Activated naive CD4-positive, alpha-beta T cell treated with anti-CD3 and anti-CD28 coated beads, Interleukin-2, amount 10 ng/mL, durations not matched to agents 7 days and 5 days (primary cell): ENCODE measurements at regions of chr3 and their contacts with region 1.

Region 1: DNA sequence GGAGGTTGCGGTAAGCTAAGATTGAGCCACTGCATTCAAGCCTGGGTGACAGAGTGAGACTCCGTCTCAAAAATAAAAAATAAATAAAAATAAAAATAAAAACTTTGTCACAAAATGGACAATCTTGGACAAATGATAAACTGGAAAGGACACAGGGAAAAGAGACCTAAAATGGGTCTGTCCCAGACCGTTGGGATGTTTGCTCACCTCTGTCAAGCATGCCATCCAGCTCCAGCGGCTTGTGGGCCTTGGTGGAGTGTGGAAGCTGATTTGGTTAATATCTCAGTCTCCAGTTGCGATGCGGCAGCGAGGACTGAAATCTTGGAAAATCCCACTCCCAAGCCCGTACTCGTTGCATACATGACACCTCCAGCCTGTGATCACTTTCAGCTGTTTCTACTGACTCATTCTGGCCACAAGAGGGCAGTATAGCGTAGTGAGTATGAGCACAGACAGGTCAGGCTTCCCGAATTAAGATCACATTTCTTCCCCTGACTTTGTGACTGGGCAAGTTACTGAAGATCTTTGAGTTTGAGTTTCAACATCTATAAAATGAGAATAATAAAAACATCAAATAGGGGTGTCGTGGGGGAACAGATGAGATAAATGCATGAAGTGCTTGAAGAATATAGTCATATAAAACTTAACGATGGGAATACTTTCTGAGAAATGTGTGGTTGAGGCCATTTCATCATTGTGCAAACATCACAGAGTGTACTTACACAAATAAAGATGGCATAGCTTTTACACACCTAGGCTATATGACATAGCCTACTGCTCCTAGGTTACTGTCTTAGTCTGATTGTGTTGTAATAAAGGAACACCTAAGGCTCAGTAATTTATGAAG is 19.6 kb upstream of the MOBP start:
- DNase-seq: peak; percentile 72
- H3K4me3 Mint-ChIP-seq: no peak overlapping the region
- H3K27ac Mint-ChIP-seq: no peak overlapping the region
- H3K4me1 Mint-ChIP-seq: no peaks in the 10 kb centered on the region
- H3K27me3 Mint-ChIP-seq: peaks cover 19% of the 10 kb centered on the region

Region 2: GRCh38 chr3:39378088-39378487 is 69.8 kb before region 1 on chr3:
- CTCF ChIA-PET with region 1: no interaction called
- DNase-seq: peak; percentile 78
- H3K4me3 Mint-ChIP-seq: no peak overlapping the region
- H3K27ac Mint-ChIP-seq: no peak overlapping the region
- H3K4me1 Mint-ChIP-seq: peaks cover 11% of the 10 kb centered on the region
- H3K27me3 Mint-ChIP-seq: peaks cover 5% of the 10 kb centered on the region

Region 3: GRCh38 chr3:39406368-39407258 is 41.2 kb before region 1 on chr3 and contains the start of gene RPSA:
- CTCF ChIA-PET with region 1: interaction called, 10 read pairs
- DNase-seq: peak; percentile 98
- H3K4me3 Mint-ChIP-seq: peak within 1 kb of the TSS; percentile 85
- H3K27ac Mint-ChIP-seq: peak within 1 kb of the TSS; percentile 95
- H3K4me1 Mint-ChIP-seq: peaks cover 53% of the 10 kb centered on the region
- H3K27me3 Mint-ChIP-seq: no peaks in the 10 kb centered on the region

Region 4: GRCh38 chr3:39434574-39434973 is 13.3 kb before region 1 on chr3:
- CTCF ChIA-PET with region 1: interaction called, 11 read pairs
- DNase-seq: no peak
- H3K4me3 Mint-ChIP-seq: no peak overlapping the region
- H3K27ac Mint-ChIP-seq: no peak overlapping the region
- H3K4me1 Mint-ChIP-seq: no peaks in the 10 kb centered on the region
- H3K27me3 Mint-ChIP-seq: peaks cover 8% of the 10 kb centered on the region

Region 5: DNA sequence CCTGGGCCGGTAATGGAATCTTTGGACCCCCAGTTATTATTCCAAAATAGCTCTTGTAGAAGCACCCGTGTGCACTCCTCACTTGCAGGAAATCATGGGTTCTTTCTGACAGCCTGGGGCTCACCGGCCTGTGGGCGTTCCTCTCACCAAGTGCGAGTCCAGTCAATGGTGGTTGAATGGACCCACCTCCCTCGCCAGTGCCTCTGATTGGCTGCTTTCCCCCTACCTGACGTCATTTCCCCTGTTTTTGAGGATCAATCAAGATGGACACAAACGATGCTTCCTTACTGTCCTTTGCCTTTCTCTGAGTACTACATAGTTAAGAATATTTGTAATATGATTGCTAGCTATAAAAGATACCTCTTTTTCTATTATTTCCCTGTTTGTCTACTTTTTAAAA is 37.7 kb after region 1 on chr3:
- CTCF ChIA-PET with region 1: interaction called, 10 read pairs
- DNase-seq: no peak
- H3K4me3 Mint-ChIP-seq: no peak overlapping the region
- H3K27ac Mint-ChIP-seq: no peak overlapping the region
- H3K4me1 Mint-ChIP-seq: no peaks in the 10 kb centered on the region
- H3K27me3 Mint-ChIP-seq: peaks cover 8% of the 10 kb centered on the region

Region 6: GRCh38 chr3:39499651-39500240 is 51.9 kb after region 1 on chr3:
- CTCF ChIA-PET with region 1: interaction called, 81 read pairs
- DNase-seq: no peak
- H3K4me3 Mint-ChIP-seq: no peak overlapping the region
- H3K27ac Mint-ChIP-seq: no peak overlapping the region
- H3K4me1 Mint-ChIP-seq: peaks cover 10% of the 10 kb centered on the region
- H3K27me3 Mint-ChIP-seq: peaks cover 48% of the 10 kb centered on the region